ENCODE measurements at regions of chr6 and their contacts with region 1.

Region 1: GRCh38 chr6:41092421-41093140 is 19.8 kb downstream of the NFYA start:
- DNase-seq: no peak
- H3K4me3 Mint-ChIP-seq: no peak overlapping the region
- H3K27ac Mint-ChIP-seq: no peak overlapping the region
- H3K4me1 Mint-ChIP-seq: peaks cover 3% of the 10 kb centered on the region
- H3K27me3 Mint-ChIP-seq: no peaks in the 10 kb centered on the region

Region 2: DNA sequence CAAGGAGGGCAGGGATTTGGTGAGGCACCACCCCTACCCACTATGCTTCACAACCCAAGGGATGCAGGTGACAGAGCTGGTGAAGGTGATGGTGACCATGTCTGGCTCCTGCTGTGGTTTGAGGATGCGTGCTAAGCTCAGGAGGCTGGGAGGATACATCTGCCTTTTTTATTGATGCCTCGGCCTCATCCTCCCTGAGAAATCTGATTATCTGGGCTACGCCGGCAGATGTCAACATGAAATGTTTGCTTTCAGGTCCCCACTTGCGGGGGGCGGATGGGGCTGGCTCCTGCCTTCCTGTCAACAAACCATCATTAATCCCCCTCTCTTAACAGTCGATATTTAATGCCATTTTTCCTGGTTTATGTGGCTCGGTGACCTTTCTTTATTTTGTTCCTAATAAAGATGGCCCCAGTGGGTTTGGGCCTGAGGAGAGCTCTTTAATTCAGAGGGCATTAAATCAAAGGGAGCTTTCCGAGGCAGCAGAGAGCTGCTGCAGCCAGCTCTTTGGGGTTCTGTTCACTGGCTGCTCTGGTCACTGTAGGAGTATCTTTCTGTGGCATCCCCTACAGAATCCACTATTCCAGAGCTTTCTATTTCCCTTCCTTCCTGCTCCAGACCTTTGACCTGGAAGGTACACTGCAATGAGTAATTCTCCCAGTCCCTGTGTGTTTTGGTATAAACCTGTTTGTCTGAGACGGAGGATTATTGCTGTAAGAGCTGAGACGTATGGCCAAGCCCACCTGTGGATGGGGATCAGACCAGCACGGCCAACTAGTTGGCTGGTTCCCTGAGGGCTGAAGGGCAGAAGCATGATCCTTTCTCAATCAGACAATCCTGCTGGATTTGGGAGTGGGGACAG is 471.8 kb before region 1 on chr6:
- intact Hi-C with region 1: no loop called
- DNase-seq: no peak
- H3K4me3 Mint-ChIP-seq: no peak overlapping the region
- H3K27ac Mint-ChIP-seq: no peak overlapping the region
- H3K4me1 Mint-ChIP-seq: no peaks in the 10 kb centered on the region
- H3K27me3 Mint-ChIP-seq: peaks cover 18% of the 10 kb centered on the region

Region 3: GRCh38 chr6:40710626-40711330 is 381.8 kb before region 1 on chr6:
- intact Hi-C with region 1: no loop called
- DNase-seq: no peak
- H3K4me3 Mint-ChIP-seq: no peak overlapping the region
- H3K27ac Mint-ChIP-seq: no peak overlapping the region
- H3K4me1 Mint-ChIP-seq: no peaks in the 10 kb centered on the region
- H3K27me3 Mint-ChIP-seq: peaks cover 11% of the 10 kb centered on the region

Region 4: DNA sequence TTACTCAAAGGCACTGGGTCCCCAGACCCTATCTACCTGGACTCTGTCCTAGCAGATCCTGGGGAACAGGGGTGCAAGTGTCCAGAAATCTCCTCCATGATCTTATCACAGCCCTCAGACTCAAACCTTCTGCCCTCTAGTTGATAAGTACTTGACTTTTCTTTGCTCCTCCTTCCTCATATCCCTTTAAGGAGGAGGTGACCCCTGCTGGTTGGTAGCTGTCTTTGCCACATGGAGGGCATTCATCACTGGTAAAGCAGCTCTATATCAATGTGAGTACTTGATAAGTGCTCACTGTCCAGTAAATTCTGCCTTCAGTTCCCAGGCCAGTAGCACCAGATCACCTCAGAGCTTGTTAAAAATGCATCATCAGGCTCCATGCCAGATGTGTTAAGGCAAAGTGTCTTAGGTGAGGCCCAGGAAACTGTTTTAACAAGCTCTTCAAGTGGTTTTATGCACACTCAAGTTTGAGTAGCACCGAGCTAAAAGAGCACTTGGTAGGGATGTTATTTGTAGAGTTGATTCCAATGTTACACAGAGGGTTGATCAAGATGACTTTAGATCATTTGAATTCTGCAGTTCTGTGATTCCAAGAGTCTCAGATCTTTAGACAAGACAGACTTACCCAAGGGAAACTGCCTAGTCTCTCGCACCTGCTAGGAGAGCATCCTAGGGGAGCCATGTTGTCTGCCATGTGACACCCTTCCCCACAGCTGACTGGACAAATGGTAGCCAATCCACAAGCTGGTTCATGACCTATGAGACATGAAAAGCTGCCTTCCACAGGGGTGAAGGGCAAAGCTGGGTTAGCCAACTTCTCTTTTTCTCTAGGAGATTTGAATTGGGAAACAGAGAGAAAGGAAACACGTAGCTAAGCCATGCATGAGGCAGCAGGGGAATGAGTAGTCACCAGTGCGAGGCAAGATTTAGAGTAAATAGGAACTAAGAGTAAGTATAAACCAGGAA is 89.8 kb after region 1 on chr6:
- intact Hi-C with region 1: loop called (anchors 2 kb)
- DNase-seq: peak; percentile 87
- H3K4me3 Mint-ChIP-seq: no peak overlapping the region
- H3K27ac Mint-ChIP-seq: no peak overlapping the region
- H3K4me1 Mint-ChIP-seq: peaks cover 28% of the 10 kb centered on the region
- H3K27me3 Mint-ChIP-seq: peaks cover 5% of the 10 kb centered on the region